ENCODE measurements at regions of chr6 and their contacts with region 1.

Region 1: DNA sequence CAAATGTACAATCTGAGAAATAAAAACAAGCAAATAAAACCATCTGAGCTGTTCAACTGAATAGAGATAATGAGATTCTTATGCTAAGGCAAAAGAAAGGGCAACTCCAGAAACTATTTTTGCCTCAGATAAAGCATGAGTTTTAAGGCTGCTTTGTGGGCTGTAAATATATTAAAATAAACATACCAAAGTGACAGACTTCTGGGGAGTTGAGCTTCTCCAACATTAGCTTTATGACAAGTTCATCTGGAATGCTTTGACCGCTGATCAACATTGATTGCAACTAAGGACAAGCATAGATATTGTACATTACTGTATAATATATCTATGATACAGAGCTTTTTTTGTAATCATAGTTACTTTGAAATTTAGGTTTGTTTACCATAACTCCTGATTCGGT is 19.3 kb downstream of the AK9 start:
- DNase-seq: peak; percentile 29
- H3K4me3 ChIP-seq: no peak overlapping the region
- H3K27ac ChIP-seq: peak overlapping the region; percentile 90
- H3K4me1 ChIP-seq: peaks cover 40% of the 10 kb centered on the region
- H3K27me3 ChIP-seq: no peaks in the 10 kb centered on the region
- CTCF ChIP-seq: no peak
- POLR2A ChIP-seq: peak; percentile 17

Region 2: DNA sequence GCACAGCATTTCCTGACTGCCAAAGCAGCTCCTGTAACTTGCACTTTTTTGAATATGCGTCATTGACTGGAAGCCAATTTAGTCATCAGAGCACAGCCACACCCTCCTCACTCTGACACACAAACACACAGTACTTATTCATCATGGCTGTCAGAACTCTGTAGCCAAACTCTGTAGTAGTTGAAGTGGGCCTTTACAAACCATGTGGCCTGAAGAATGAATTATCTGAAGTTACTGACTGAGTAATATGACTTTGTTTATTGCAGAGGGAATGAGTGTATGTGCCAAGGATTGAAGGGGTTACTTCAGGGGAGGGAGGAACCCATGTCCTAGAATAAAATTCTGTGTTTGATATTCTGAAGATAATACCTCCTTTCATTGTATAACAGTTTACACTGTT is 122.1 kb after region 1 on chr6:
- CTCF ChIA-PET with region 1: no interaction called
- POLR2A ChIA-PET with region 1: no interaction called
- dilution Hi-C with region 1: no loop called
- intact Hi-C with region 1: loop called (anchors 1 kb)
- DNase-seq: peak; percentile 93
- H3K4me3 ChIP-seq: no peak overlapping the region
- H3K27ac ChIP-seq: peak overlapping the region; percentile 75
- H3K4me1 ChIP-seq: peaks cover 38% of the 10 kb centered on the region
- H3K27me3 ChIP-seq: no peaks in the 10 kb centered on the region
- CTCF ChIP-seq: no peak
- POLR2A ChIP-seq: no peak

Measured in endothelial cell of umbilical vein (primary cell).